Heart left ventricle (tissue), 16 donors: ENCODE measurements at regions of chr1 and their contacts with region 1.

Region 1: DNA sequence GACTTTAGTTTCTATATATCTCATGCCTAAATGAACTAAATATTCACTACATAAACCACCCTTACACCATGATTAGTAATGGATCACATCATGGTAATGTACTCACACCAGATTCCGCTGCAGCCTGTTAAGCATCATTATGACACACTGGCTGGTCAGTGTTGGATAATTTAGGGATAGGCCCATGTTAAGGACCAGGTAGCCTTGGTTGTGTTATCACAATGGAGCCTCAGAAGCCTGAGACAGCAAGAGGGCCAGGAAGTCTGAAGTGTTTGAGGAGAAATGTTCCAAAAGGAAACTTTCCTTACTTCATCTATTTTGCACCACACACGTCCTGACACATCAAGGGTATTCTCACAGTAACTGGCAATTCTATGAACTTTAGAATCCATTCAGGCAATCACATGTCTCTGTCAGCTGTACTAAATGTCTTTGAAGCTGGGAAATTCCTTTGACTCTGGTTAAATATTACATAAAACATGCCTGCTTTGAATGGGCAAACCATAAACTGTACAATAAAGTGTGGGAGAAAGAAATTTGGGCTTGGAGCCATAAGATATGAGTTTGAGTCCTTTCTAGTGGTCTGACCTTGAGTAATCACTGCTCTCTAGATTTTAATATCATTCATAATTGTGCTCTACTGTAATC is 105.3 kb upstream of the DPT start:
- DNase-seq: no peak
- ATAC-seq: peak; percentile 58 to 74 (median 60)
- H3K4me3 ChIP-seq: no peak overlapping the region
- H3K27ac ChIP-seq: peak overlapping the region in 7 of 12 donors; percentile 15 to 61 (median 27)
- H3K4me1 ChIP-seq: peaks cover 0 to 35% (median 6%) of the 10 kb centered on the region in 12 donors
- H3K27me3 ChIP-seq: no peaks in the 10 kb centered on the region
- CTCF ChIP-seq: no peak
- POLR2A ChIP-seq: no peak

Region 2: GRCh38 chr1:168719306-168720111 is 114.8 kb before region 1 on chr1:
- intact Hi-C with region 1: loop called in 2 of 10 experiments (anchors 10 kb)
- DNase-seq: no peak
- ATAC-seq: no peak
- H3K4me3 ChIP-seq: no peak overlapping the region
- H3K27ac ChIP-seq: no peak overlapping the region
- H3K4me1 ChIP-seq: peaks cover 0 to 39% (median 5%) of the 10 kb centered on the region in 12 donors
- H3K27me3 ChIP-seq: no peaks in the 10 kb centered on the region
- CTCF ChIP-seq: no peak
- POLR2A ChIP-seq: no peak